ENCODE measurements at regions of chr7 and their contacts with region 1.

Region 1: DNA sequence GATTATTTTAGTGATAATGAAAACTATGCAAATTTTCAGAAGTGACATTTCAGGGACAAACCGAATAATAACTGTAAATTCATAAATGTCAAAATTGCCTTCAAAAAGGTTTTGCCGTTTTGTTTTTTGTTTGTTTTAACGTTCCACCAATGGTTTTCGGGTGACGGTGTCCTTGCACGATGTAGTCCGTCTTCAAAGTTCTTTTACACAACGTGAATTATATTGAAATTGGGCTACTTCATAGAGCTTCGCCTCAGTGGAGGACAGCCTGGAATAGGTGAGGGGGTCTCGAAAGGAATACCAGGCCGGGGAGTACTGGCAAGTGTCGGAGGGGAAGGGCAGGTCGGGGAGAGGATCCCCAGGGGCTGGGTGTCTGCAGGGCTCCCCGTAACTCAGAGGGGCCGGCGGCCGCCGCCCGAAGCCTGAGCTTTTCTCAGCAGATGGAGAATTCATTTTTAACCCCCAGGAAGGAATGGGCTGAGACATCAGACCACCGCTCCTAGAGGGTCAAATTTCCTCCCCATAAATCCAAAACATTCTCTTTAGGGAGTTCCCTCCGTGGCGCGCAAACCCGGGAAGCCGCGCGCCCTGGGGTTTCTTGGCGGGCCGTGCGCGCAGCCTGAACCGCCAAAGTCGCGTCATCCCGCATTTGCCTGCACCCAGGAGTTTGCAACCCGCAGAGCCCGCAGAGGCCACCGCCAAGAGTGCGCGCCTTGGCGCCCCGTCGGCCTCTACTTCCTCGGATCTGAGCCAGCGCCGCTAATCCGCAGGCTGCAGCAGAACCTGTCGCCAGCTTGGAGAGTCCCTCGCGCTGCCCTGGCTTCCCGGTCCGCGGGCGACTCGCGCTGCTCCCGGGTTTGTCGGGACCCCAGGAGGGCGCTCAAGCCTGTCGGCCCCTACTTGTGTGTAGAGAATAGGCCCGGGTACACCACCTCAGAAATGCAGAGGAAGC is 17.3 kb upstream of the EVX1 start:
- DNase-seq: peak in 1 of 2 experiments; percentile 66
- H3K4me3 ChIP-seq: peak overlapping the region; percentile 3 to 49 (median 12); a peak in 5 of 8 replicates
- H3K27ac ChIP-seq: no peak overlapping the region
- H3K4me1 ChIP-seq: peaks cover 2 to 9% (median 3%) of the 10 kb centered on the region in 4 experiments
- H3K27me3 ChIP-seq: peaks cover 54 to 96% (median 88%) of the 10 kb centered on the region in 4 experiments
- CTCF ChIP-seq: no peak
- EP300 ChIP-seq: no peak
- POLR2A ChIP-seq: no peak
- RAD21 ChIP-seq: no peak

Region 2: GRCh38 chr7:27235387-27236311 is 10.4 kb after region 1 on chr7:
- CTCF ChIA-PET with region 1: interaction called, 13 read pairs
- POLR2A ChIA-PET with region 1: no interaction called
- DNase-seq: peak in 1 of 2 experiments; percentile 86
- H3K4me3 ChIP-seq: peak overlapping the region; percentile 9 to 60 (median 37); a peak in 7 of 8 replicates
- H3K27ac ChIP-seq: no peak overlapping the region
- H3K4me1 ChIP-seq: peaks cover 2 to 11% (median 7%) of the 10 kb centered on the region in 4 experiments
- H3K27me3 ChIP-seq: peaks cover 67 to 87% (median 78%) of the 10 kb centered on the region in 4 experiments
- CTCF ChIP-seq: peak; percentile 61 to 74 (median 62)
- EP300 ChIP-seq: peak in 1 of 2 experiments; percentile 46; a peak in 1 of 3 replicates
- POLR2A ChIP-seq: no peak
- RAD21 ChIP-seq: peak; percentile 83 to 87

Region 3: GRCh38 chr7:27316311-27316710 is 91.1 kb after region 1 on chr7:
- CTCF ChIA-PET with region 1: no interaction called
- POLR2A ChIA-PET with region 1: no interaction called
- DNase-seq: no peak
- H3K4me3 ChIP-seq: no peak overlapping the region
- H3K27ac ChIP-seq: no peak overlapping the region
- H3K4me1 ChIP-seq: peaks cover 0 to 6% (median 4%) of the 10 kb centered on the region in 4 experiments; a peak in 4 of 7 replicates
- H3K27me3 ChIP-seq: no peaks in the 10 kb centered on the region
- CTCF ChIP-seq: no peak
- EP300 ChIP-seq: no peak
- POLR2A ChIP-seq: no peak
- RAD21 ChIP-seq: no peak

Measured in H1 (cell line).